ENCODE measurements at regions of chr5 and their contacts with region 1.

Region 1: GRCh38 chr5:95718203-95718602 is 12.9 kb upstream of the RHOBTB3 start:
- DNase-seq: peak; percentile 18
- H3K4me3 Mint-ChIP-seq: no peak overlapping the region
- H3K27ac Mint-ChIP-seq: no peak overlapping the region
- H3K4me1 Mint-ChIP-seq: no peaks in the 10 kb centered on the region
- H3K27me3 Mint-ChIP-seq: peaks cover 28% of the 10 kb centered on the region

Region 2: GRCh38 chr5:95554647-95555548 is 163.3 kb before region 1 on chr5 and contains the starts of genes ARSK and SKIC3:
- intact Hi-C with region 1: loop called (anchors 1 kb)
- DNase-seq: peak; percentile 90
- H3K4me3 Mint-ChIP-seq: peak within 1 kb of the TSS; percentile 94
- H3K27ac Mint-ChIP-seq: peak within 1 kb of the TSS; percentile 94
- H3K4me1 Mint-ChIP-seq: peaks cover 39% of the 10 kb centered on the region
- H3K27me3 Mint-ChIP-seq: no peaks in the 10 kb centered on the region
- total RNA-seq, gene ARSK: 3.9 and 4.2 TPM in 2 replicates
- total RNA-seq, gene SKIC3: 60.2 and 63.8 TPM in 2 replicates

Region 3: GRCh38 chr5:95728494-95729114 is 10.4 kb after region 1 on chr5:
- intact Hi-C with region 1: loop called (anchors 1 kb)
- DNase-seq: no peak
- H3K4me3 Mint-ChIP-seq: no peak overlapping the region
- H3K27ac Mint-ChIP-seq: no peak overlapping the region
- H3K4me1 Mint-ChIP-seq: peaks cover 23% of the 10 kb centered on the region
- H3K27me3 Mint-ChIP-seq: peaks cover 62% of the 10 kb centered on the region

Region 4: GRCh38 chr5:95781101-95781583 is 62.9 kb after region 1 on chr5:
- intact Hi-C with region 1: no loop called
- DNase-seq: peak; percentile 47
- H3K4me3 Mint-ChIP-seq: peak overlapping the region; percentile 56
- H3K27ac Mint-ChIP-seq: peak overlapping the region; percentile 29
- H3K4me1 Mint-ChIP-seq: peaks cover 22% of the 10 kb centered on the region
- H3K27me3 Mint-ChIP-seq: peaks cover 2% of the 10 kb centered on the region

Region 5: DNA sequence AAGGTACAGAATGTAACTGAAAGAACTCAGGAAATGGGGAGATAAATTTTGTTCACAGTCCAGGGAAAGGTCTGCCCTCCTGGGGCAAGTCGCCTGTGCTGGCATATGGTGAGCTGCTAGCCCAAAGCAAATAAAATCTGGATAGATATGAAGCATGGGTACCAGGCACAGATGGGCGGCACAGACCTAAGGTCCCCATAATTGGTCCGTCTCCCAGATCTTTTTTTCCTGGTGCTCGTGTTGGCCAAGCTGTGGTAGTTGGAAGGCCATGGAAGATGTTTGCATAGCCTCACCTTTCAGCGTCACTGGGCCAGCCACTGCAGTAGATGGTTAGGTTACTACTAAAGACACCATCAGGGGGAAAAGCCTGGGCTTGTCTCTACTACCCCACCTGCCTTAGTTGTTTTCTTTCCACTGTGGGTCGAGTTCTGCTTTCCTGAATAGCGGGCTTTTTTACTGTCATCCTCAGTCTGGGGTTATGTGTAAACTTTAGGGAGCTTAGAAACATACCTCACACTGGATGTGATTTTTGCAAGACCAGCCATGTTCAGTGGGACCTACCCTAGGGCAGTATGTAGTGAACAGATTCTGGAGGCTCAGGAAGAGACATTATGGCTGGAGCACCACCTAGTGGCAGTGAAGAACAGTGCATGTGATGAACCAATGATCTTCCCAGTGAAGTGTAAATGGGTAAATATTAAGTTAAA is 128.5 kb after region 1 on chr5:
- intact Hi-C with region 1: loop called (anchors 2 kb)
- DNase-seq: peak; percentile 44
- H3K4me3 Mint-ChIP-seq: no peak overlapping the region
- H3K27ac Mint-ChIP-seq: no peak overlapping the region
- H3K4me1 Mint-ChIP-seq: peaks cover 37% of the 10 kb centered on the region
- H3K27me3 Mint-ChIP-seq: peaks cover 12% of the 10 kb centered on the region

Region 6: GRCh38 chr5:96536991-96537785 is 819.0 kb after region 1 on chr5:
- intact Hi-C with region 1: loop called (anchors 5 kb)
- DNase-seq: peak; percentile 32
- H3K4me3 Mint-ChIP-seq: no peak overlapping the region
- H3K27ac Mint-ChIP-seq: peak overlapping the region; percentile 78
- H3K4me1 Mint-ChIP-seq: peaks cover 26% of the 10 kb centered on the region
- H3K27me3 Mint-ChIP-seq: peaks cover 3% of the 10 kb centered on the region